Head of caudate nucleus (tissue), 42 donors: ENCODE measurements at regions of chr9 and their contacts with region 1.

Region 1: DNA sequence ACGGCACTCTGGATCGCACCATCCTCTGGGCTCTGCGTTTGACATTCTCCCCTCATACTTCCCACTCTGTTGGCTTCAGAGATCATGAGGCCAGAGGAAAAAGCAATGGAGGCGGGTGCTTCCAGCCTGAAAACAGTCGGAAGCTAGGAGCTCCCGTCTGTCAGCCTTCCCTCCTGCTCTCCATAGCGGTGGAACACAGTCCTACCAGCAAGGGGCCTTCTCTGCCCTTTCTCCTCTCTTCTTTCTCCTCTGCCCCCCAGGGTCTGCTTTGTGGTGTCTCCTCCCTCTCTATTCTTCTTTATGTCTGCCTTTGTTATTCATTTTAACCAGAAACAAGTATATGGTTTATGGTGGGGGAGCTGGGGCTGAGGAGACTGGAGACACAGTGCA is 152.5 kb upstream of the NFIB start:
- DNase-seq: no peak

Region 2: GRCh38 chr9:13992136-13993088 is 474.0 kb before region 1 on chr9:
- intact Hi-C with region 1: no loop called
- DNase-seq: no peak

Region 3: GRCh38 chr9:14524873-14525515 is 58.6 kb after region 1 on chr9:
- intact Hi-C with region 1: loop called (anchors 10 kb)
- DNase-seq: no peak

Region 4: DNA sequence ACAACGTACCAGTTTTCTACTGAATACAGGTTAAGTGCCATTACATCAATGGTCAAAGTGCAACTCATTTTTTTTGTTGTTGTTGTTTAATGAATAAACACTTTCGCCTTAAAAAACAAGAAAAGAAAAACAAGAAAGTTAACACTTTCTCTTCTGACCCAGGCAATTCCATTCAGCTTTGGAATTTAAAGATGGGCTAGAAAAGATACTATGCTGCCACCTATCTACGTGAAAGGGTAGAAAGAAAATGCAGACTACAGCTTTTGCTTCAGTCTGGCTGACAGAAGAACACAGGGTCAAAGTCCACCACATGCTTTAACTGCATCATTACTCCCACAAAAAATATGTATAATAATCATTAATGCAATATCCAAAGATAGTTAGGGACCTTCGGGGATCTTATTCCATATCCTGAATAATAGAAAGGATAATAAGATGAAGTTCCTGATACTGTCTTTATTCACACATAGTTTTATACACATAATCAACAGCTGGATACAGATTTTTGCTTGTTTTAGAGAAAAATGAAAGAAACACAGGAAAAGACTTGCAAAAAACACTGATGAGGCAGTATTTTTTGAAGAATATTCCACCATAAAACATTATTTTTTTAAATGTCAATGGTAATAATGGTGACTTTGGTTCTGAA is 186.4 kb after region 1 on chr9:
- intact Hi-C with region 1: loop called (anchors 10 kb)
- DNase-seq: peak in 1 of 42 donors; percentile 25